ENCODE measurements at regions of chrX and their contacts with region 1.

Region 1: DNA sequence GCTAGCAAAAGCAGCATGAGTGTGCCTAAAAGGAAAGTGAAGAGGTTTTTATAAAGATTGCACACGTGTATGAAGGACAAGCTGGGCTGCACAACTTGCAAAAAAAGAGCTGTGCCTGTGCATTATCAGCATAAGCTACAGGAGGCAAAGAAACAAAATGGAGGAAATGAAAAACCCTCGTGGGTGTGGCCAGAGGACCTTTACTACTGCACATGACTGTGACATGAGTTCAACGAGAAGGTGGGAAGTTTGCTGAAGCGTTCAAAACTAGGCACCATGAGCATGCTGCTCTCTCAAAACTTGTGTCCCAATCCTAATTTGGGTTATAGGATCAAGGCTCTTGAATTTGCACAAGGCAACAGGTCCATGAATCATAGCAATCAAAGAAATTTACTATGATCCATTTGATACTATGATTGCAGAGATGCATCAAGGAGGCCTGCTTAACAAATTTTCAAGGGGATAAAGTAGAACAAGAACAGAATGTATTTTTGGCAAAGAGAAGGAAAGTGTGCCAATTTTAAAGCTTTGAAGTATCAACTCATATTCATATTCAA is 38.1 kb upstream of the CXorf38 start:
- DNase-seq: peak; percentile 43
- ATAC-seq: peak; percentile 72
- H3K4me3 ChIP-seq: no peak overlapping the region
- H3K4me3 Mint-ChIP-seq: peak overlapping the region; percentile 56
- H3K27ac ChIP-seq: peak overlapping the region; percentile 40 to 46
- H3K27ac Mint-ChIP-seq: peak overlapping the region; percentile 28
- H3K4me1 ChIP-seq: peaks cover 15 to 16% of the 10 kb centered on the region in 2 donors
- H3K4me1 Mint-ChIP-seq: peaks cover 25% of the 10 kb centered on the region
- H3K27me3 ChIP-seq: no peaks in the 10 kb centered on the region
- H3K27me3 Mint-ChIP-seq: no peaks in the 10 kb centered on the region
- CTCF ChIP-seq: no peak

Region 2: DNA sequence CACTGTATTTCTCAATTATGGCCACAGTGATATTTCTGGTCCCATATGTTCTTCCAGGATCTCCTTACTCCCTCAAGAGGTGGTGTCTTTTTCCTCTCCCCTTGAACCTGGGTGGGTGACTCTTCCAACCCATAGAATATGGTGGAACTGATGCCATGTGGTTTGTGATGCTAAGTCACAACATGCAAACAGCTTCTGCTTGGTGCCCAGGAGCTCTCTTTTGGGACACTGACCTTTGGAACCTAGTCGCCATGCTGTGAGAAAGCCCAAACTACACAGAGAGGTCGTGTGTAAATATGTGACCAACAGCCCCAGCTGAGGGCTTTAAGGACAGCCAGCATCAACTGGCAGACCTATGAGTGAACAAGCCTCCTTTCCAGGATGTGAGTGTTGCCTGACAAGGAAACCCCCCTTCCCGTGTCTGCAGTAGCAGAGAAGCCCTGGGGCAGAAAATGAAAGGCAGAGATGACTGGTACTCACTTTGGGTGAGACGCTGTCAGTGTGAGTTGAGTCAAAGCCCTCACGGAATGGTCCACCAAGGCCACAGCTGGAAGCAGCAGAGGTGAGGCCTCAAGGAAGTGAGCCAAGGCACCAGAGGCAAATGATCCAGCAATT is 811.1 kb before region 1 on chrX:
- CTCF ChIA-PET with region 1: no interaction called
- POLR2A ChIA-PET with region 1: no interaction called
- intact Hi-C with region 1: no loop called
- DNase-seq: no peak
- ATAC-seq: no peak
- H3K4me3 ChIP-seq: no peak overlapping the region
- H3K4me3 Mint-ChIP-seq: no peak overlapping the region
- H3K27ac ChIP-seq: no peak overlapping the region
- H3K27ac Mint-ChIP-seq: no peak overlapping the region
- H3K4me1 ChIP-seq: no peaks in the 10 kb centered on the region
- H3K4me1 Mint-ChIP-seq: no peaks in the 10 kb centered on the region
- H3K27me3 ChIP-seq: no peaks in the 10 kb centered on the region
- H3K27me3 Mint-ChIP-seq: peaks cover 4% of the 10 kb centered on the region
- CTCF ChIP-seq: no peak

Region 3: DNA sequence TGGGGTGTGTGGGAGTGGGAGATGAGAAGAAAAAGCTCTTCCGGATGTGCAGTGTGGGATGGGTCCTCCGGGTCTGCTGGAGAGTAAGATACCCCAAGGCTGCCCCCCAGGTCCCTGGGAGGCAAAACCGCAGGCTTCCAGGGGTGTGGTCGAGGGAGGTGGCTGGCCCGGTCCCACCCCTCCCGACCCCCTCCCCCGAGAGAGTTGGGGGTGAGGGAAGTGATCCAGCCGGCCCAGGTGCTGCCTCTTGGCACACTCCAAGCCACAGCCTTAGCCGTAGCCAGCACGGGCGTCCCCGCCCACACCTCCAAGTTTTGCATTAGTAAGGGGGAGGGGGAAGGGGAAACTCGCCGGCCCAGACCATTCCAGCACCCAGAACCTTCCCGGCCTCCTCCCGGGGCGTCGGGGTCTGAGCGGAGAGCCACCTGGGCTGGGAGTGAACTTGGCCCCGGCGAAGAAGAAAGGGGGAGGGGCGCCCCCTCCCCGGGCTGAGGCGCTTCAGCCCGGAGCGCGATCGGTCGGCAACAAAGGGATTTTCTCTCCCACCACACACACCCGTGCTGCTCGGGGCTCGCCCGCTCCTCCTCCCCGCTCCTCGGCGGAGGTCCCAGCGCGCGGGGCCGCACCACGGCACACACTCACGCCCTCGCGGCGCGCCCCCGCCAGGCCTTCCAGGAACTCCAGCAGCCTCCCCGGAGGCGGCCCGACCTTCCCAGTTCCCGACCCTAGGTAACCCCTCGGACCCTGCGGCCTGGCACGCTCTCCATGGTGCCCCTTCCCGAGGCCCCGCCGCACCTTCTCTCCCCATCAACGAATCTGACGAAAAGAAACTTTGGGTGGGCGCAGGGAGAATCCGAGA is 602.1 kb before region 1 on chrX:
- CTCF ChIA-PET with region 1: no interaction called
- POLR2A ChIA-PET with region 1: no interaction called
- intact Hi-C with region 1: no loop called
- DNase-seq: peak; percentile 60
- ATAC-seq: peak; percentile 72
- H3K4me3 ChIP-seq: peak overlapping the region in 4 of 5 experiments; percentile 19 to 39 (median 36)
- H3K4me3 Mint-ChIP-seq: peak overlapping the region; percentile 78
- H3K27ac ChIP-seq: no peak overlapping the region
- H3K27ac Mint-ChIP-seq: no peak overlapping the region
- H3K4me1 ChIP-seq: peaks cover 40 to 45% of the 10 kb centered on the region in 2 donors
- H3K4me1 Mint-ChIP-seq: peaks cover 52% of the 10 kb centered on the region
- H3K27me3 ChIP-seq: no peaks in the 10 kb centered on the region
- H3K27me3 Mint-ChIP-seq: no peaks in the 10 kb centered on the region
- CTCF ChIP-seq: no peak

Region 4: GRCh38 chrX:40671126-40671525 is 14.3 kb before region 1 on chrX:
- CTCF ChIA-PET with region 1: no interaction called
- POLR2A ChIA-PET with region 1: no interaction called
- intact Hi-C with region 1: no loop called
- DNase-seq: no peak
- ATAC-seq: no peak
- H3K4me3 ChIP-seq: no peak overlapping the region
- H3K4me3 Mint-ChIP-seq: no peak overlapping the region
- H3K27ac ChIP-seq: no peak overlapping the region
- H3K27ac Mint-ChIP-seq: no peak overlapping the region
- H3K4me1 ChIP-seq: no peaks in the 10 kb centered on the region
- H3K4me1 Mint-ChIP-seq: no peaks in the 10 kb centered on the region
- H3K27me3 ChIP-seq: no peaks in the 10 kb centered on the region
- H3K27me3 Mint-ChIP-seq: no peaks in the 10 kb centered on the region
- CTCF ChIP-seq: no peak

Region 5: DNA sequence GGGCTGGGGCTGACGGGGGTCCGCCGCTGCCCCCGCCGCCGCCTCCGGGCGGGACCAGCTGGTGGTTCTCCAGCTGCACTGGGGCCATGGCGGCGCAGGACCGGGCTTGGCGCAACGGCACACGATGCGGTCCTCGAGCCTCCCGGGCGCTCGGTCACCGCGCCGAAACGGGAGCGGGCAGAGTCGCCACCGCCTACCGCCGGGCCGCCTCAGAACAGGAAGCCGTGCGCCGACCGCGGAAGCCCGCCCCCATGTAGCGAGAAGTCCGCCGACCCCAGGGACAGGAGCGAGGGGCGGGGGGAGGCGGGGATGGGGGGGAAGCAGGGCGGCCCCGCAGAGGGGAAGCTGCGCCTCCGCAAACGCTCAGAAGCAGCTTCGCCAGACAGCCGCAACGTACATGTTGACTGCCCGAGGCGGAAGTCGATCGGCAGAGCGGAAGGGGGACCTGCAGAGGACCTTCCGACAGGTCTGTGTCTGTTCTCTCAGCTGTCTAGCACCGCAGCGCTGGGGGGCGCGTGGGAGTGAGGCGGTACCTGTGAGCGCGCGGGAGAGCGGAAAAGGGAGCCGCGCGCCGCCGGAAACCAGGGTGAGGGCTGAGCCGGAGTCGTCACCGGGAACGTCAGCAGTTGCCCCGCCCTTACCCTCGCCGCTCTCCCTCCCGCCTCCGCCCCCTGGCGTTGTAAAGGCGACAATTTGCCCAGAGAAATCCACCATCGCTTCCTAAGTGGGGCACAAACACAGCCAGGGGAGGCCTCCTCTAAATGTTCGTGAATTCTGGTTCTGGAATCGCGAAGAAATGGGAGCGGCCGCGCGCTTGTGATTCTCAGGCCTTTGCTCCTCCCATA is 50.1 kb after region 1 on chrX and contains the start of gene MED14:
- CTCF ChIA-PET with region 1: no interaction called
- POLR2A ChIA-PET with region 1: no interaction called
- intact Hi-C with region 1: loop called (anchors 10 kb)
- DNase-seq: peak; percentile 94
- ATAC-seq: peak; percentile 84
- H3K4me3 ChIP-seq: peak within 1 kb of the TSS; percentile 64 to 93 (median 82)
- H3K4me3 Mint-ChIP-seq: peak within 1 kb of the TSS; percentile 91
- H3K27ac ChIP-seq: peak within 1 kb of the TSS; percentile 91 to 98
- H3K27ac Mint-ChIP-seq: peak within 1 kb of the TSS; percentile 98
- H3K4me1 ChIP-seq: peaks cover 25 to 31% of the 10 kb centered on the region in 2 donors
- H3K4me1 Mint-ChIP-seq: peaks cover 34% of the 10 kb centered on the region
- H3K27me3 ChIP-seq: peaks cover 0 to 2% (median 0%) of the 10 kb centered on the region in 4 experiments
- H3K27me3 Mint-ChIP-seq: no peaks in the 10 kb centered on the region
- CTCF ChIP-seq: peak; percentile 56
- total RNA-seq, gene MED14: 63.5 and 67.1 TPM in 2 replicates